CD4-positive, alpha-beta T cell (primary cell): ENCODE measurements at regions of chr4 and their contacts with region 1.

Region 1: DNA sequence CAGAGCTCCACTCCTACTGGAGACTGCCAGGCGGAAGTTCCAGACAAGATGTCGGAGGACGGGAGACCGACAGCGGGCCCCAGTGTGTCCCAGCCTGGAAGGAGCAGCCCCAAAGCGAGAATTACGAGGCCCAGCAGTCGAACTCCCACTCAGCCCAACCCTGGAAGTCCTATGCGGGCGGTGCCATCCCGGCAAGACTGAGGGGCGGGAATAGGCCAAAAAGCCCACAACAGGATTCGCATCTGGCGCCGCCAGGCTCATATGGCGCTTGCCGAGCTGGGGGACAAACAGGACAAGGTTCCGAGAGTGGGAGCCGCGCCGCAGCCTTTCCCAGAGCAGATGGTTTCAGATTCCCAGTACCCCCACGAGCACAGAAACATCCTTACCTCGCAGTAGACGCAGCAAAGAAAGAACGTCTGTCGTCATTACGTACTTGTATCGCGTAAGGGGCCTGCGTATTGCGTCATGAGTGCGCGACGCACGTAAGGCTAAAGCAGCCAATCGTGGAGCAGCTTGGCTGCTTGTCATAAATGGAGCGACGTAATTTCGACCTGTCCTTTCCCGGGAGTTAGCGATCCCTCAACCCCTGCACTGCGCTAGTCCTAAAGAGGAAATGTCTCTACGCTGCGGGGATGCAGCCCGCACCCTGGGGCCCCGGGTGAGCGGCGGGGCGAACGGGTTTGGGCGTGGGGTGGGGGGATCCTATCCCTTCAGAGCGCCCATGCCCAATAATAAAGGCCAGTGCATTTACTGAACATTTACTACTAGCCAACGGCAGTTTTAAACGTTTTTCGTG is at the starts of genes LIAS and RPL9:
- DNase-seq: peak; percentile 86 to 98 (median 92)
- ATAC-seq: peak; percentile 78
- H3K4me3 ChIP-seq: peak within 1 kb of the TSS; percentile 68
- H3K4me3 Mint-ChIP-seq: peak within 1 kb of the TSS; percentile 96
- H3K27ac ChIP-seq: peak within 1 kb of the TSS; percentile 92 to 98
- H3K27ac Mint-ChIP-seq: peak within 1 kb of the TSS; percentile 100
- H3K4me1 ChIP-seq: peaks cover 26% of the 10 kb centered on the region
- H3K4me1 Mint-ChIP-seq: peaks cover 49% of the 10 kb centered on the region
- H3K27me3 ChIP-seq: no peaks in the 10 kb centered on the region
- H3K27me3 Mint-ChIP-seq: no peaks in the 10 kb centered on the region
- CTCF ChIP-seq: no peak
- total RNA-seq, gene LIAS: 10.0 to 10.1 TPM
- total RNA-seq, gene RPL9: 2,639 to 2,826 TPM

Region 2: GRCh38 chr4:37686373-37687193 is 1772.1 kb before region 1 on chr4 and contains the start of gene RELL1:
- CTCF ChIA-PET with region 1: no interaction called
- POLR2A ChIA-PET with region 1: interaction called, 3 read pairs
- intact Hi-C with region 1: loop called in 1 of 2 experiments (anchors 10 kb)
- DNase-seq: peak; percentile 95 to 100 (median 98)
- ATAC-seq: peak; percentile 81
- H3K4me3 ChIP-seq: peak within 1 kb of the TSS; percentile 78
- H3K4me3 Mint-ChIP-seq: peak within 1 kb of the TSS; percentile 99
- H3K27ac ChIP-seq: peak within 1 kb of the TSS; percentile 88 to 90
- H3K27ac Mint-ChIP-seq: peak within 1 kb of the TSS; percentile 99
- H3K4me1 ChIP-seq: peaks cover 32% of the 10 kb centered on the region
- H3K4me1 Mint-ChIP-seq: peaks cover 43% of the 10 kb centered on the region
- H3K27me3 ChIP-seq: no peaks in the 10 kb centered on the region
- H3K27me3 Mint-ChIP-seq: no peaks in the 10 kb centered on the region
- CTCF ChIP-seq: no peak
- total RNA-seq, gene RELL1: 48.6 to 50.3 TPM

Region 3: GRCh38 chr4:39353478-39354253 is 105.0 kb before region 1 on chr4:
- CTCF ChIA-PET with region 1: no interaction called
- POLR2A ChIA-PET with region 1: interaction called, 21 read pairs
- intact Hi-C with region 1: loop called (anchors 5 kb)
- DNase-seq: peak in 3 of 14 experiments; percentile 71 to 81 (median 72)
- ATAC-seq: peak; percentile 77
- H3K4me3 ChIP-seq: peak overlapping the region; percentile 53
- H3K4me3 Mint-ChIP-seq: peak overlapping the region; percentile 88
- H3K27ac ChIP-seq: peak overlapping the region; percentile 75 to 88
- H3K27ac Mint-ChIP-seq: peak overlapping the region; percentile 97
- H3K4me1 ChIP-seq: peaks cover 20% of the 10 kb centered on the region
- H3K4me1 Mint-ChIP-seq: peaks cover 67% of the 10 kb centered on the region
- H3K27me3 ChIP-seq: no peaks in the 10 kb centered on the region
- H3K27me3 Mint-ChIP-seq: no peaks in the 10 kb centered on the region
- CTCF ChIP-seq: no peak

Region 4: GRCh38 chr4:39446751-39447573 is 11.7 kb before region 1 on chr4:
- CTCF ChIA-PET with region 1: interaction called, 4 read pairs
- POLR2A ChIA-PET with region 1: interaction called, 42 read pairs
- intact Hi-C with region 1: no loop called
- DNase-seq: peak in 13 of 14 experiments; percentile 4 to 82 (median 34)
- ATAC-seq: peak; percentile 86
- H3K4me3 ChIP-seq: peak overlapping the region; percentile 53
- H3K4me3 Mint-ChIP-seq: peak overlapping the region; percentile 76
- H3K27ac ChIP-seq: no peak overlapping the region
- H3K27ac Mint-ChIP-seq: peak overlapping the region; percentile 63
- H3K4me1 ChIP-seq: peaks cover 12% of the 10 kb centered on the region
- H3K4me1 Mint-ChIP-seq: peaks cover 9% of the 10 kb centered on the region
- H3K27me3 ChIP-seq: no peaks in the 10 kb centered on the region
- H3K27me3 Mint-ChIP-seq: no peaks in the 10 kb centered on the region
- CTCF ChIP-seq: no peak

Region 5: GRCh38 chr4:39527273-39528060 is 68.8 kb after region 1 on chr4 and contains the start of gene UGDH:
- CTCF ChIA-PET with region 1: no interaction called
- POLR2A ChIA-PET with region 1: interaction called, 13 read pairs
- intact Hi-C with region 1: loop called in 1 of 2 experiments (anchors 2 kb)
- DNase-seq: peak; percentile 73 to 96 (median 89)
- ATAC-seq: peak; percentile 98
- H3K4me3 ChIP-seq: peak within 1 kb of the TSS; percentile 98
- H3K4me3 Mint-ChIP-seq: peak within 1 kb of the TSS; percentile 98
- H3K27ac ChIP-seq: peak within 1 kb of the TSS; percentile 52 to 65
- H3K27ac Mint-ChIP-seq: peak within 1 kb of the TSS; percentile 88
- H3K4me1 ChIP-seq: peaks cover 22% of the 10 kb centered on the region
- H3K4me1 Mint-ChIP-seq: peaks cover 22% of the 10 kb centered on the region
- H3K27me3 ChIP-seq: no peaks in the 10 kb centered on the region
- H3K27me3 Mint-ChIP-seq: no peaks in the 10 kb centered on the region
- CTCF ChIP-seq: no peak
- total RNA-seq, gene UGDH: 3.5 to 3.7 TPM

Region 6: GRCh38 chr4:39977489-39978377 is 519.0 kb after region 1 on chr4 and contains the start of gene PDS5A:
- CTCF ChIA-PET with region 1: interaction called, 3 read pairs
- POLR2A ChIA-PET with region 1: interaction called, 3 read pairs
- intact Hi-C with region 1: loop called in 1 of 2 experiments (anchors 1 kb)
- DNase-seq: peak; percentile 76 to 96 (median 86)
- ATAC-seq: peak; percentile 85
- H3K4me3 ChIP-seq: peak within 1 kb of the TSS; percentile 90
- H3K4me3 Mint-ChIP-seq: peak within 1 kb of the TSS; percentile 86
- H3K27ac ChIP-seq: peak within 1 kb of the TSS; percentile 78 to 92
- H3K27ac Mint-ChIP-seq: peak within 1 kb of the TSS; percentile 93
- H3K4me1 ChIP-seq: peaks cover 36% of the 10 kb centered on the region
- H3K4me1 Mint-ChIP-seq: peaks cover 34% of the 10 kb centered on the region
- H3K27me3 ChIP-seq: no peaks in the 10 kb centered on the region
- H3K27me3 Mint-ChIP-seq: no peaks in the 10 kb centered on the region
- CTCF ChIP-seq: peak; percentile 73
- total RNA-seq, gene PDS5A: 80.0 to 80.6 TPM